HepG2 (cell line): ENCODE measurements at regions of chr1 and their contacts with region 1.

Region 1: DNA sequence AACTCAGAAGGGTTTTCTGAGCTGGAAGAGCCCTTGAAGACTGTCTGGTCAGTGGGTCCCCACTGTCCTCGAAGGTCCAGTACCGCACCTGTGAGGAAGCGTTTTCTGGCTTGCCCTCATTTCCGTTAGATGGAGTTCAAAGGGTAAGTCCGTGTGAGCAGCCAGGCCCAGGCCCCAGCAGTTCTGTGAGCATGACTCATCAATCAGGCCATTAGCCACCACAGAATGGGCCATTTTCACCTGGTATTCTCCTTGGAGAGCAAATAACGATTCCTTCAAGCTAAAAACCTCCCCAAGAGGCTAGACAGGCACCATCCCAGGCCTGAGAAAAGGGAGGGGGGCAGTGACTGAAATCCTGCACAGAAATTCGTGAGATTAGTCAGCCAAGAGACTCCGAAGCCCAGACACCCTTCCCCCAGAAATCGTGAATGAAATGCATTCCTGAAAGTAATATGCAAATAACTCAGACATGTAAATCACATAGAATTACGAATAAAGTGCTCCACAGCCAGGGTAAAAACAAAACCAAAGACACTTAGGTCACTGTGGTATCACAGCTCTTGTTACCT is 66.0 kb downstream of the BCAR3 start:
- DNase-seq: peak; percentile 77
- ATAC-seq: peak; percentile 9
- H3K4me3 ChIP-seq: peak overlapping the region in 1 of 3 experiments; percentile 2; a peak in 1 of 6 replicates
- H3K27ac ChIP-seq: peak overlapping the region; percentile 100
- H3K4me1 ChIP-seq: peaks cover 87% of the 10 kb centered on the region
- H3K27me3 ChIP-seq: no peaks in the 10 kb centered on the region
- CTCF ChIP-seq: no peak; the same call in 1 of the 2 replicates
- EP300 ChIP-seq: peak in 1 of 2 experiments; percentile 51; a peak in 2 of 4 replicates
- POLR2A ChIP-seq: no peak; a peak in 1 of 4 replicates
- RAD21 ChIP-seq: no peak

Region 2: DNA sequence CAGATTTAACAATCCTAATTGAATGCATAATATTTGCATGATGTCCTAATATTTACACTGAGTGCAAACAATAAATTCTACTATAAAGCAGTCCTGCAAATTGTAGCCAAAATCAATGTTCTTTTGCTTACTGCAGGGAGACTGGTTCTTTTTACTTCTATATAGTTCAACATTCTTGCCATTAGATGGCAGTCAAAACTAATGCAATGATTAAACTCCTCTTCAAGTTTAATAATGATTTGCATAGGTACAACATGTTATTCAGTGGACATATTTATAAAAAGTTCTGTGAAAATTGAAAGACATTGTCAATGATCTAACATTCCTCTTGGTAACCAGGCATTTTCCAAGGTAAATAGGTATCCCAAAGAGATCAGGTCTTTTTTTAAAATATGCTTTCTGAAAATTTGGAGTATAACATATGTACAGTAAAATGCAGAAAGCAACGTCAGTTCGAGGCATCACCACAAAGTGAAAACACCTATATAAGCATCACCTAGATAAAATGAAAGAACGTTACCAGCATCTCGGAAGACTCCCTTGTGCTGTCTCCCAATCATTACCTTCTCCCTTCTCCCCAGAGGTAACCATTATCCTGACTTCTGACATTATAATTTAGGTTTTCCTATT is 177.6 kb before region 1 on chr1:
- CTCF ChIA-PET with region 1: no interaction called
- POLR2A ChIA-PET with region 1: interaction called, 12 read pairs
- in situ Hi-C with region 1: no loop called
- intact Hi-C with region 1: no loop called
- DNase-seq: peak; percentile 49
- ATAC-seq: no peak
- H3K4me3 ChIP-seq: no peak overlapping the region
- H3K27ac ChIP-seq: no peak overlapping the region
- H3K4me1 ChIP-seq: peaks cover 27% of the 10 kb centered on the region
- H3K27me3 ChIP-seq: no peaks in the 10 kb centered on the region; a peak in 1 of 5 replicates
- CTCF ChIP-seq: peak; percentile 70
- EP300 ChIP-seq: no peak
- POLR2A ChIP-seq: no peak
- RAD21 ChIP-seq: peak; percentile 36; the same call in 1 of the 2 replicates

Region 3: DNA sequence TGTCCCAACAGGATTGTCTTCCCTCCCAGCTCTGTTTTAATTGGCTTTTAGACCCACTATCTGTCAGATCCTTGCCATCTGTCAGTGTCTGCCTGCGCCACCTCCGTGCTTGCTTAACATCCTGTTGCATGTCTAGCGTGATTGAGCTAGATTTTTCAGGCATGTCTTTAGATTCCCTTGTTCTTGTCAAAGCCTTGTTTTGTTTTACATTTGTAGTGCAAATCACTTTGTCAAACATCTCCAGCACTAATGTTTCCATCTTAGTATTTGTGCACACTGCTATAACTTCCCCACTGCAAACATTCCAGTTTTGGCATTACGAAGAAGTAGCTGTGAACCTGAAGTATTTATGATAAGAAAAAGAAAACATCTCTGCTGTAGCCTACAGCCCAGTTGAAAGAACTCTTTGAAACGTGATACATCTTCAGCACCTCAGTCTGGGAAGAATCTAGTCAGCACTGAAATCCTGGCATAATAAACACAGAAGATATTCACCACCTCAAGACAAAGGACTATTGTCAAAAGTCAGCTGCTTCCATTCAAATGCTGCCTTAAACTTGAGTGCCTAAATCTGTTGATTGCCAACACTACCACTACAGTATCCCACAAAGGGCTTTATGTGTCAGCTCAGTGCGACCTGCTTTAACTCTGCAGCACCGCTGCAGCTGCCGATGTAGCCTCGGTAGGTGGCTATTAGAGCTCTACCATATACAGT is 62.8 kb before region 1 on chr1:
- CTCF ChIA-PET with region 1: no interaction called
- POLR2A ChIA-PET with region 1: interaction called, 20 read pairs
- in situ Hi-C with region 1: no loop called
- intact Hi-C with region 1: no loop called
- DNase-seq: peak; percentile 71
- ATAC-seq: peak; percentile 77
- H3K4me3 ChIP-seq: no peak overlapping the region
- H3K27ac ChIP-seq: peak overlapping the region; percentile 0
- H3K4me1 ChIP-seq: peaks cover 41% of the 10 kb centered on the region
- H3K27me3 ChIP-seq: no peaks in the 10 kb centered on the region; a peak in 1 of 5 replicates
- CTCF ChIP-seq: no peak
- EP300 ChIP-seq: no peak
- POLR2A ChIP-seq: no peak
- RAD21 ChIP-seq: no peak

Region 4: DNA sequence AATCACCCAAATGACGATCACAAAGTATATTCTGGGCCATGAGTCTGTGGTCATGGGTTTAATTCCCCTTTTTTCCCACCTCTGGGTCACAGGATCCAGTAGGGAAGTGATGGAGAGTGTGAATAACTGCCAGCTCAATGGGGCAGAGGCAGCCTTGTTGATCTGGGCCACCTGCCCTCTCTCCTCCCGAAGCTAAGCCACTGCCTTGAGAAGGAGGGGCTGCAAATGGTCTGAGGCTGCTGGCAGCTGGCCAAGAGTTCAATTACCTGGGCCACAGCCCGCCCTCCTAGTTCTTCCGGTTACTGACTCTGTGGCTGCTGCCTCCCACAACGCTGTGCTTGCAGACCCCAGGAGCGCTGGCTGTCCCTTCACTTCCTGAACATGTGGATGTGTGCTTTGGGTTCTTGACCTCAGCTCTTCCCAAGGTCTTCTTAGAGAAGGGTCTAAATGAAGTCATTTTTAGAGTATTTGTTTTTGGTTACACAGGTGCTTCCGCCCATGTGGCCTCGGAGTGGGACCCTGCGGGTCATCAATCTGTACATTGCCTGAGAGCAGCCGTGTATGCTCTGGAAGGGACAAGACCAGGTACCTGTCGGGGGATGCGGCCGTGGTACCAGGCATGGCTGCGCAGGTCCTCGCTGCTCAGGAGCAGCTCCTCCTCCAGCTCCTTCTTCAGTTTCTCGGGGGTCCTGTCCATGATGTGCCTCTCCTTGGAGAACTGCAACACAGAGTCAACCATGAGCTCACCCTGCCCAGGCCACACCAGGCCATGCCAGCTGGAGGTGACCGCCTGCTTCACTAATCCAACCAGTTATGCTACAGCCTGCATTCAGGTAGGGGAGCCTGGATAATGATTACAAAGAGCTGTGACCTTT is 23.8 kb before region 1 on chr1:
- CTCF ChIA-PET with region 1: no interaction called
- POLR2A ChIA-PET with region 1: interaction called, 214 read pairs
- in situ Hi-C with region 1: no loop called
- intact Hi-C with region 1: loop called (anchors 1 kb)
- DNase-seq: peak; percentile 90
- ATAC-seq: peak; percentile 86
- H3K4me3 ChIP-seq: peak overlapping the region; percentile 81 to 88 (median 86)
- H3K27ac ChIP-seq: peak overlapping the region; percentile 94
- H3K4me1 ChIP-seq: peaks cover 58% of the 10 kb centered on the region
- H3K27me3 ChIP-seq: no peaks in the 10 kb centered on the region; a peak in 1 of 5 replicates
- CTCF ChIP-seq: no peak
- EP300 ChIP-seq: peak in 1 of 2 experiments; percentile 75; a peak in 2 of 4 replicates
- POLR2A ChIP-seq: peak; percentile 69 to 71
- RAD21 ChIP-seq: no peak; the same call in 1 of the 2 replicates

Region 5: GRCh38 chr1:93629099-93630059 is 13.7 kb after region 1 on chr1:
- CTCF ChIA-PET with region 1: no interaction called
- POLR2A ChIA-PET with region 1: interaction called, 19 read pairs
- in situ Hi-C with region 1: no loop called
- intact Hi-C with region 1: no loop called
- DNase-seq: peak; percentile 65
- ATAC-seq: peak; percentile 71
- H3K4me3 ChIP-seq: no peak overlapping the region
- H3K27ac ChIP-seq: no peak overlapping the region
- H3K4me1 ChIP-seq: peaks cover 26% of the 10 kb centered on the region
- H3K27me3 ChIP-seq: no peaks in the 10 kb centered on the region
- CTCF ChIP-seq: peak; percentile 84
- EP300 ChIP-seq: no peak
- POLR2A ChIP-seq: no peak
- RAD21 ChIP-seq: peak; percentile 89

Region 6: DNA sequence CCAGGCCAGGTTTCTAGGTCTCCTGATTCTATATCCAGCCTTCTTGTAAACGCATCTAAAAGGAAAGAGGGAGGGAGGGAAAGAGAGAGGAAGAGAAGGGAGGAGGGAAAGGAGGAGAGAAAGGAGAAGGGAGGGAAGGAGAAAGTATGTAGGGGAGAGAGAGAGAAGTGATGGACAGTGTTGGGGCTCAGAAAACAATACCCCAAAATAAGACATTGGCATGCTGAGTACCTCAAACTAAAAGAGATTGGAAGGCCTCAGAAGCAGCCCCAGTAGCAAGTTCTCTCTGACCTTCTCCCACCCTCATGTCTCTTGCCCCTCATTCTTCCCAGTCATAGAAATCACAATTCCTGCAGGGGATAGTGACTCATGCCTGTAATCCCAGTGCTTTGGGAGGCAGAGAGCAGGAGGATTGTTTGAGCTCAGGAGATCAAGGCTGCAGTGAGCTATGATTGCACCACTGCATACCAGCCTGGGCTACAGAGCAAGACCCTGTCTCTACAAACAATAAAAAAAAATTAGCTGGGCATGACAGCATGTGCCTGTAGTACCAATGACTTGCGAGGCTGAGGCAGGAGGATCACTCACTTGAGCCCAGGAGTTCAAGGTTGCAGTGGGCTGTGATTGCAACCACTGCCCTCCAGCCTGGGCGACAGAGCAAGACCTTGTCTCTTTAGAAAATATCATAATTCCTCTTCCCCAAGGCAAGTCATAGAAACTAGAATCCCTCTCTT is 212.1 kb after region 1 on chr1:
- CTCF ChIA-PET with region 1: no interaction called
- POLR2A ChIA-PET with region 1: interaction called, 30 read pairs
- in situ Hi-C with region 1: no loop called
- intact Hi-C with region 1: no loop called
- DNase-seq: peak; percentile 94
- ATAC-seq: peak; percentile 98
- H3K4me3 ChIP-seq: peak overlapping the region in 1 of 3 experiments; percentile 1; a peak in 1 of 6 replicates
- H3K27ac ChIP-seq: peak overlapping the region; percentile 73
- H3K4me1 ChIP-seq: peaks cover 29% of the 10 kb centered on the region
- H3K27me3 ChIP-seq: no peaks in the 10 kb centered on the region
- CTCF ChIP-seq: 0 out of 2 replicates have a peak, but pooled peaks have one; percentile 9
- EP300 ChIP-seq: peak; percentile 77 to 89; a peak in 3 of 4 replicates
- POLR2A ChIP-seq: no peak
- RAD21 ChIP-seq: peak; percentile 40

Region 7: DNA sequence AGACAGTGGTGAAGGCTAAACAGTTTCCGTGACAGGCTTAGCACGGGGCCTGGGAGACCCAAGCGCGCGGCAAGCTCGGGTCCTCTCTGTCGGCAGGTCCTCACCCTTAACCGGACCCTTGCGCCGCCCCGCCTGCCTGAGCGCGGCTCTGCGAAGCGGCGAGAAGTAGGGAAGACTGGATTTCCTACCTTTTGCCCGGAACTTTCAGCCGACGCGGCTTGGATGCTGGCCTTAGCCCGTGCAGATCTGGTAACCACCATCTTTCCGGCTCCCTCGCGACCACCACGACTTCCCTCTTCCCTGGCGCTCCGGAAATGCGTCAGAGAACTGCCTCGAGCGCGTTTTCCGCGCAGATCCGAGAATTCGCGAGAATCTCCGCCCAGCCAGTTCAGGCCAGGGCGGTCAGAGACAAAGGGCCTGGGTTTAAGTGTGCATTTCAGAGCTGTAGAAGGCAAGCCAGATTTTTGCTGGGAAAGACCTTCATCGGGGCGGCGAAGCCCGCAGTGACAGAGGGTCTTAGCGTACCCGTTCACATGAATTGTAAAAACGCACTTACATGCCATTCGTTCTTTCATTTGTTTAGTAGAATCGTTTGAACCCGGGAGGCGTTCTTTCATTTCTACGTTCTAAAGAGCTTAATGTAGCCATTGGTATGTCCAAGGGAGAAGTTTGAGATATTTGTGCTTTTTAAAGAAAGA is 263.4 kb after region 1 on chr1 and contains the start of gene DNTTIP2:
- CTCF ChIA-PET with region 1: no interaction called
- POLR2A ChIA-PET with region 1: interaction called, 11 read pairs
- in situ Hi-C with region 1: no loop called
- intact Hi-C with region 1: no loop called
- DNase-seq: peak; percentile 87
- ATAC-seq: peak; percentile 96
- H3K4me3 ChIP-seq: peak within 1 kb of the TSS; percentile 84 to 97 (median 95)
- H3K27ac ChIP-seq: peak within 1 kb of the TSS; percentile 92
- H3K4me1 ChIP-seq: peaks cover 31% of the 10 kb centered on the region
- H3K27me3 ChIP-seq: no peaks in the 10 kb centered on the region; a peak in 1 of 5 replicates
- CTCF ChIP-seq: peak; percentile 22; the same call in 1 of the 2 replicates
- EP300 ChIP-seq: 0 out of 4 replicates have a peak, but pooled peaks of 1 of the 2 experiments have one; percentile 45
- POLR2A ChIP-seq: peak; percentile 95 to 99
- RAD21 ChIP-seq: no peak; the same call in 1 of the 2 replicates
- total RNA-seq, gene DNTTIP2: 63.3 and 93.0 TPM in 2 replicates